AG04449 (cell line): ENCODE measurements at regions of chr11 and their contacts with region 1.

Region 1: DNA sequence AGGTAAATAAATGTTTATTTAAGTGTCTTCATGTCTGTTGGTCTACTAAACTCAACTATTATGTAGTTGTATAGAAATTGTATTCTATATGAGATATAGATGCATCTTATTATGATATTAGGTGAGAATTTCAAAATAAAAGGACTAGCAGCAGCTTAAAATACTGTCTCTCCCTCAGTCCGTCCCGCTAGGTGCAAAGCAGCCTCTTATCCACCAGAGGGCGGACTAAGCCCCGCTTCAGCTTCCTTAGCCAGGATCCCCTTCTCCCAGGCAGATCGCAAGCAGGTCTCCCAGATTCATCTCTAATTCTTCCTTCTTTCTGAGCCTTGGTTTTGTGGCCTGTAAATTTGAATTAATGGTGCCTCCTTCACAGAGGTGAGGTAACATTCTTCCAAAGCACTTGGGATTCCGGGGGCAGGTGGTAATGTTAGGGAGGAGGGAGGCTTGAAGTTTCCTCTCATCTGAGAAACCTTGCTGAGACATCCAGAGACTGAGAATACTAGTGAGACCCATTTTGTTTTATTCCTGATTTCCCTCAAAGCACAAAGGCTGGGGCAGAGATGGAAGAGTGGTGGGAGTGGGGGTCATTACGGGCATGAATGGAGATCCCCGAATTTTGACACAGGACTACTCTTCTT is 13.5 kb upstream of the INSC start:
- DNase-seq: no peak
- H3K4me3 ChIP-seq: no peak overlapping the region
- CTCF ChIP-seq: peak; percentile 88

Region 2: GRCh38 chr11:15053191-15053685 is 48.0 kb before region 1 on chr11:
- CTCF ChIA-PET with region 1: no interaction called
- POLR2A ChIA-PET with region 1: no interaction called
- DNase-seq: no peak
- H3K4me3 ChIP-seq: no peak overlapping the region
- CTCF ChIP-seq: no peak

Region 3: GRCh38 chr11:15113381-15113780 is 12.2 kb after region 1 on chr11:
- CTCF ChIA-PET with region 1: interaction called, 27 read pairs
- POLR2A ChIA-PET with region 1: no interaction called
- DNase-seq: no peak
- H3K4me3 ChIP-seq: no peak overlapping the region
- CTCF ChIP-seq: no peak

Region 4: GRCh38 chr11:15146271-15147003 is 45.2 kb after region 1 on chr11:
- CTCF ChIA-PET with region 1: interaction called, 18 read pairs
- POLR2A ChIA-PET with region 1: interaction called, 3 read pairs
- DNase-seq: no peak
- H3K4me3 ChIP-seq: no peak overlapping the region
- CTCF ChIP-seq: no peak

Region 5: GRCh38 chr11:15169815-15170551 is 68.8 kb after region 1 on chr11:
- CTCF ChIA-PET with region 1: interaction called, 14 read pairs
- POLR2A ChIA-PET with region 1: no interaction called
- DNase-seq: no peak
- H3K4me3 ChIP-seq: no peak overlapping the region
- CTCF ChIP-seq: no peak

Region 6: DNA sequence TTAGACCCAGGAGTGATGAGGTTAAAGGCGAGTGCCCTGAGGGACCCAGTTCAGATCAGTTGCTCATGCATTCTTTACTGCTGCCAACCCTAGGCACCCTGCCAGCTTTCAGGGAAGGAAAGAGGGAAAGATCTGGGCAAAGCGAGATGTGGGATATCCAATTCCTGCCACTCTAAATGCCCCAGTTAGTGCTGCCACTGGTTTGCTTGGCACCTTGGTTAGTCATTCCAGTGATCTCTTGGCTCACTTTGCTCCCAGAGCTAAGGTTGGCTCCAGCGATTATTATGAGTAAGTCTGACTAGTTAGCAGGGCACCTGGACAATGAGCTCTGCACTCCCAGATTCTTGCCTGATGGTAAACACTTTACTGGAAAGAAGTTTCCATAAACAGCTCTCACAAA is 98.5 kb after region 1 on chr11:
- CTCF ChIA-PET with region 1: interaction called, 373 read pairs
- POLR2A ChIA-PET with region 1: interaction called, 3 read pairs
- DNase-seq: no peak
- H3K4me3 ChIP-seq: no peak overlapping the region
- CTCF ChIP-seq: no peak

Region 7: DNA sequence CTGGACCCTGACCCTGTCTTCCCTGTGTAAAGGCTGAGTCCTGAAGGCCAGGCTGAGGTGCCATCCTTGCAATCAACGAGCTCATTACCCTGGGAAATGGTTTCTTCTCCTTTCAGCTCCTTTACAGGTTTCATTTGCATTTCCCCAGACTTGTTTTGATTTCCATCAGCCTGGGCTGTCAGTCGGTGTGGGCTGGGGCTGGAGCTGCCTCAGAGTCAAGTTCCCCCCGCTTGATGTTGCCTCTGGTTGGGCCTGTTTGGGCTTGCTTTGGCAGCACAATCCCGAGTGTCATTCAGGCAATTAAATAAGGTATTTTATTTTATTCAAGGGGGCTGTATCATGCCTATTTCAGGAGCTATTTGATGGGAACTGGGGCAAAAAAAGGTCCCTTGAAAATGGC is 438.5 kb after region 1 on chr11:
- CTCF ChIA-PET with region 1: no interaction called
- POLR2A ChIA-PET with region 1: no interaction called
- DNase-seq: no peak
- H3K4me3 ChIP-seq: no peak overlapping the region
- CTCF ChIP-seq: no peak